ENCODE measurements at regions of chr5 and their contacts with region 1.

Region 1: GRCh38 chr5:26791433-26791832 is 247.0 kb downstream of the CDH9 start:
- DNase-seq: no peak
- ATAC-seq: no peak
- H3K4me3 ChIP-seq: no peak overlapping the region
- H3K4me3 Mint-ChIP-seq: no peak overlapping the region
- H3K27ac ChIP-seq: no peak overlapping the region
- H3K27ac Mint-ChIP-seq: no peak overlapping the region
- H3K4me1 ChIP-seq: no peaks in the 10 kb centered on the region
- H3K4me1 Mint-ChIP-seq: no peaks in the 10 kb centered on the region
- H3K27me3 ChIP-seq: no peaks in the 10 kb centered on the region
- H3K27me3 Mint-ChIP-seq: no peaks in the 10 kb centered on the region
- CTCF ChIP-seq: no peak

Region 2: GRCh38 chr5:26660116-26660515 is 131.3 kb before region 1 on chr5:
- CTCF ChIA-PET with region 1: no interaction called
- POLR2A ChIA-PET with region 1: no interaction called
- intact Hi-C with region 1: no loop called
- DNase-seq: no peak
- ATAC-seq: no peak
- H3K4me3 ChIP-seq: no peak overlapping the region
- H3K4me3 Mint-ChIP-seq: no peak overlapping the region
- H3K27ac ChIP-seq: no peak overlapping the region
- H3K27ac Mint-ChIP-seq: no peak overlapping the region
- H3K4me1 ChIP-seq: no peaks in the 10 kb centered on the region
- H3K4me1 Mint-ChIP-seq: no peaks in the 10 kb centered on the region
- H3K27me3 ChIP-seq: no peaks in the 10 kb centered on the region
- H3K27me3 Mint-ChIP-seq: no peaks in the 10 kb centered on the region
- CTCF ChIP-seq: no peak

Region 3: DNA sequence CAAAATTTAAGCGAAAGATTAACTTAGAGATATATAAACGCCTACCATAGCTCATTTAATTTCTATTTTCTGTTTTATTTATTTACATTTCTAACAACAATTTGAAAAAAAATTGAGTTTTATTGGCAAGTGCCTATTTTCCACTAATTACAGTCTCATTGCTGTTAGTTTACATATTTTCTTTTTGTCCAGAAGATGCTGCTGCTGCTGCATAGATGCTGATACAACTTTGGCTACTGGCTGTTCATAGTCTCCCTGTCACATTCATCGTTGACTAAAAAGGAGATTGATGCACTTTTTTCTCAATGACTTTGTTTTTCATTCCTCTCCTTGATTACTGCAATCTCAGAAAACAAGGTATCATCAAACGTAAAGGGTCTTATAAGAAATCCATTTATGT is 11.5 kb after region 1 on chr5:
- CTCF ChIA-PET with region 1: interaction called, 4 read pairs
- POLR2A ChIA-PET with region 1: no interaction called
- intact Hi-C with region 1: loop called (anchors 1 kb)
- DNase-seq: no peak
- ATAC-seq: no peak
- H3K4me3 ChIP-seq: no peak overlapping the region
- H3K4me3 Mint-ChIP-seq: no peak overlapping the region
- H3K27ac ChIP-seq: no peak overlapping the region
- H3K27ac Mint-ChIP-seq: no peak overlapping the region
- H3K4me1 ChIP-seq: no peaks in the 10 kb centered on the region
- H3K4me1 Mint-ChIP-seq: no peaks in the 10 kb centered on the region
- H3K27me3 ChIP-seq: no peaks in the 10 kb centered on the region
- H3K27me3 Mint-ChIP-seq: no peaks in the 10 kb centered on the region
- CTCF ChIP-seq: no peak